ENCODE measurements at regions of chr2 and their contacts with region 1.

Region 1: GRCh38 chr2:100242891-100243619 is 79.2 kb downstream of the LONRF2 start:
- ATAC-seq: peak; percentile 70 to 92 (median 78)
- H3K4me3 ChIP-seq: no peak overlapping the region
- H3K27ac ChIP-seq: no peak overlapping the region
- H3K4me1 ChIP-seq: peaks cover 22 to 23% of the 10 kb centered on the region in 2 donors

Region 2: GRCh38 chr2:99559075-99559662 is 683.9 kb before region 1 on chr2:
- in situ Hi-C with region 1: loop called in 4 of 9 experiments (anchors 10 to 25 kb)
- ATAC-seq: peak; percentile 48 to 99 (median 97)
- H3K4me3 ChIP-seq: no peak overlapping the region
- H3K27ac ChIP-seq: no peak overlapping the region
- H3K4me1 ChIP-seq: peaks cover 0 to 7% of the 10 kb centered on the region in 2 donors

Region 3: GRCh38 chr2:99569386-99569785 is 673.7 kb before region 1 on chr2:
- in situ Hi-C with region 1: loop called in 3 of 9 experiments (anchors 10 to 25 kb)
- ATAC-seq: no peak
- H3K4me3 ChIP-seq: no peak overlapping the region
- H3K27ac ChIP-seq: no peak overlapping the region
- H3K4me1 ChIP-seq: peaks cover 38 to 39% of the 10 kb centered on the region in 2 donors

Region 4: DNA sequence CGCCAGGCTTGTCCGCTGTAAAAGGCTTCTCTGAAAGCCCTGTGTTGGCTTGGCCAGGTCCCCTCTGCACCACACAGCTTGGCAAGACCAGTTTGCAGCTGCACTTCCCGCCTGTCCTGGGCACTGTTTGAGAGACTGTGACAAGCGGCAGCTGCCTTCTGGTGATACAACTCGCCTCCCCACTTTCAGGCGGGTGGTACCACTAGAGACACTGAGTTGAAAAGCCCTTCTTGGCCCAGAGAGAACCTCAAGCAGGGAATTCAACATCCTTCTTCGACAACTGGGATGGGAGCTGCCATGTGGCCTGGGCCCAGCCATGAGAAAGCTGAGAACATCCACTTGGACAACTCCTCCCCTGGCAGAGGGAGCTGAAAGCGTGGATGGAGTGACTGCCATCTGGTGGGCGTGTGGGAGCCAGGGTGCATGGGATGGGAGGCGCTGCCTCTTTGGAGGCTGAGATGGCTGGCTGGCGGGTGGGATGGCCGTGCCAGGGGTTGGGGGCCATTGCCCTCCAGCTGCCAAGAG is 627.7 kb before region 1 on chr2:
- in situ Hi-C with region 1: no loop called
- ATAC-seq: peak in 2 of 8 experiments; percentile 52 to 71
- H3K4me3 ChIP-seq: no peak overlapping the region
- H3K27ac ChIP-seq: no peak overlapping the region
- H3K4me1 ChIP-seq: peaks cover 7 to 19% of the 10 kb centered on the region in 2 donors

Region 5: GRCh38 chr2:99710721-99711120 is 532.3 kb before region 1 on chr2:
- in situ Hi-C with region 1: loop called in 1 of 9 experiments (anchors 25 kb)
- ATAC-seq: peak in 2 of 8 experiments; percentile 27 to 56
- H3K4me3 ChIP-seq: no peak overlapping the region
- H3K27ac ChIP-seq: no peak overlapping the region
- H3K4me1 ChIP-seq: peaks cover 0 to 14% of the 10 kb centered on the region in 2 donors

Region 6: DNA sequence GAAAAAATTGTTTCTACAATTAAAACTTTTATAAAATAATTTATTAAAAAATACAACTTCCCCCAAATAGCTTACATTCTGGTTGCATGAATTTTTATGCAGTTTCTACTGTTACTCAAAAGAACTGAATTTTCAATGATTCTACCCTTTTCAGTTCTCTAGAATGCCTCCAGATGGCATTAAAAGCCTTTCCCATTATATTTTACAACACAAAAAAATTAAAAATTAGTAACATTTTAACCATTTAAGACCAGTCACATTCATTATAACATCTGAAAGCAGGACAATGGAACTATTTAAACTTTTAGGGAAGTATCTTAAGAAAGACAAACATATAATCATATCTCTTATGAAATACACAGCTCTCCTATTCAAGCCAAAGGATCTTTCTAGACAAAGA is 517.2 kb before region 1 on chr2:
- in situ Hi-C with region 1: loop called in 2 of 9 experiments (anchors 10 to 25 kb)
- ATAC-seq: no peak
- H3K4me3 ChIP-seq: no peak overlapping the region
- H3K27ac ChIP-seq: no peak overlapping the region
- H3K4me1 ChIP-seq: peaks cover 3 to 12% of the 10 kb centered on the region in 2 donors

Measured in motor neuron (in vitro differentiated cells).